ENCODE measurements at regions of chr20 and their contacts with region 1.

Region 1: GRCh38 chr20:62921119-62921687 is 5.1 kb downstream of the DIDO1 start:
- DNase-seq: peak; percentile 47
- CTCF ChIP-seq: peak; percentile 15

Region 2: GRCh38 chr20:62907384-62908317 is 13.6 kb before region 1 on chr20:
- CTCF ChIA-PET with region 1: interaction called, 153 read pairs
- POLR2A ChIA-PET with region 1: no interaction called
- DNase-seq: no peak
- CTCF ChIP-seq: peak; percentile 33

Region 3: DNA sequence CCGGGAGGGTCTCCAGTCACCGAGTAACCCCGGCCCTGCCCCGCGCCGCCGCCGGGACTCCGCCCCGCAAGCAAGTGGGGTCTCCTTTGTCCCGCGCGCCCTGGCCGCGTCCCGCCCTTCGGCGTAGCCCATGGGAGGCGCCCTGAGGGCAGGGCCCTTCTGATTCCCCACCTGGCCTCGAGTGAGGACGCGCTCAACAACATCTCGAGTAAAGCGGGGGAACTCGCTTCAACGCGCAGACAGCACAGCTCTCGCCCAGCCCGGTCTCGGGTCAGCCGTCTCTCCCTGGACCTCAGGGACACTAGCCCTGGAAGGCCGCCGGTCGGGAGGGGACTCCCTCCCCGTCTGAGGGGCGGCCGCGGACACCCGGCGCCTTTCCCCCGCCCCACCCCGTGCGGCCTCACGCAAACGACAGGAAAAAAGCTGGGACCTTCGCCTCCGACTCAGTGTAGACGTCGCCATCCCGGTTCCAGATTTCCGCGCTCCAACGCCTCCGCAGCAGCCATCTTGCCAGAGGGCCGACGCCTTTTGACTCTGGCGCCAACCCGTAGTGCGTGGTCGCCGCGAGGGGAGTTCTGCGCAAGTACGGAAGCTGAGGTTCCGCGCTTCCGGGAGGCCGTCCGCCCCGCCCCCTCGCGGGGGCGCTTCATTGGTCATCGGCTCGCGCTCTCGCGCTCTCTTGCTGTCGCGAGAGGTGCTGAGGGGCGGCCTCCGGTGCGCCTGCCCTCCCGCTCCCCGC is 16.3 kb after region 1 on chr20:
- CTCF ChIA-PET with region 1: interaction called, 21 read pairs
- POLR2A ChIA-PET with region 1: interaction called, 3 read pairs
- DNase-seq: peak; percentile 97
- CTCF ChIP-seq: no peak

Measured in GM10248 (cell line).